ENCODE measurements at regions of chr1 and their contacts with region 1.

Region 1: GRCh38 chr1:229621663-229622062 is 4.3 kb downstream of the TAF5L start:
- DNase-seq: no peak
- H3K4me3 ChIP-seq: no peak overlapping the region
- H3K27ac ChIP-seq: no peak overlapping the region
- H3K4me1 ChIP-seq: peaks cover 0 to 11% (median 5%) of the 10 kb centered on the region in 4 experiments; a peak in 6 of 7 replicates
- H3K27me3 ChIP-seq: peaks cover 0 to 2% (median 0%) of the 10 kb centered on the region in 4 experiments; a peak in 1 of 7 replicates
- CTCF ChIP-seq: no peak
- EP300 ChIP-seq: no peak
- POLR2A ChIP-seq: no peak
- RAD21 ChIP-seq: no peak

Region 2: GRCh38 chr1:229529639-229530038 is 92.0 kb before region 1 on chr1:
- CTCF ChIA-PET with region 1: no interaction called
- POLR2A ChIA-PET with region 1: no interaction called
- DNase-seq: no peak
- H3K4me3 ChIP-seq: no peak overlapping the region
- H3K27ac ChIP-seq: no peak overlapping the region
- H3K4me1 ChIP-seq: no peaks in the 10 kb centered on the region
- H3K27me3 ChIP-seq: no peaks in the 10 kb centered on the region
- CTCF ChIP-seq: no peak
- EP300 ChIP-seq: no peak
- POLR2A ChIP-seq: no peak
- RAD21 ChIP-seq: no peak

Region 3: GRCh38 chr1:229558571-229559335 is 62.9 kb before region 1 on chr1 and contains the start of gene ABCB10:
- CTCF ChIA-PET with region 1: interaction called, 14 read pairs
- POLR2A ChIA-PET with region 1: interaction called, 9 read pairs
- DNase-seq: peak; percentile 97 to 98
- H3K4me3 ChIP-seq: peak within 1 kb of the TSS; percentile 75 to 91 (median 76)
- H3K27ac ChIP-seq: no peak within 1 kb of the TSS; the same call in 1 of the 2 replicates
- H3K4me1 ChIP-seq: peaks cover 0 to 12% (median 2%) of the 10 kb centered on the region in 4 experiments; a peak in 4 of 7 replicates
- H3K27me3 ChIP-seq: no peaks in the 10 kb centered on the region; a peak in 1 of 7 replicates
- CTCF ChIP-seq: peak; percentile 82 to 91 (median 88)
- EP300 ChIP-seq: peak in 1 of 2 experiments; percentile 67; a peak in 1 of 3 replicates
- POLR2A ChIP-seq: no peak; a peak in 1 of 3 replicates
- RAD21 ChIP-seq: peak; percentile 22 to 50; a peak in 3 of 4 replicates
- total RNA-seq, gene ABCB10: 8.1 and 11.9 TPM in 2 replicates

Region 4: GRCh38 chr1:229913489-229913888 is 291.8 kb after region 1 on chr1:
- CTCF ChIA-PET with region 1: no interaction called
- POLR2A ChIA-PET with region 1: no interaction called
- DNase-seq: no peak
- H3K4me3 ChIP-seq: no peak overlapping the region
- H3K27ac ChIP-seq: no peak overlapping the region
- H3K4me1 ChIP-seq: no peaks in the 10 kb centered on the region
- H3K27me3 ChIP-seq: no peaks in the 10 kb centered on the region
- CTCF ChIP-seq: no peak
- EP300 ChIP-seq: no peak
- POLR2A ChIP-seq: no peak
- RAD21 ChIP-seq: no peak